HEK293 (cell line): ENCODE measurements at regions of chr7 and their contacts with region 1.

Region 1: GRCh38 chr7:115217373-115217772 is 295.5 kb downstream of the MDFIC start:
- H3K4me3 ChIP-seq: no peak overlapping the region
- H3K27ac ChIP-seq: no peak overlapping the region
- H3K4me1 ChIP-seq: no peaks in the 10 kb centered on the region
- CTCF ChIP-seq: no peak

Region 2: GRCh38 chr7:114865564-114865963 is 351.8 kb before region 1 on chr7:
- CTCF ChIA-PET with region 1: interaction called, 11 read pairs
- POLR2A ChIA-PET with region 1: no interaction called
- H3K4me3 ChIP-seq: no peak overlapping the region
- H3K27ac ChIP-seq: no peak overlapping the region
- H3K4me1 ChIP-seq: no peaks in the 10 kb centered on the region
- CTCF ChIP-seq: peak; percentile 34; the same call in 1 of the 2 replicates

Region 3: GRCh38 chr7:115449689-115450088 is 232.3 kb after region 1 on chr7:
- CTCF ChIA-PET with region 1: no interaction called
- POLR2A ChIA-PET with region 1: no interaction called
- H3K4me3 ChIP-seq: no peak overlapping the region
- H3K27ac ChIP-seq: no peak overlapping the region
- H3K4me1 ChIP-seq: no peaks in the 10 kb centered on the region
- CTCF ChIP-seq: no peak

Region 4: GRCh38 chr7:115475761-115476385 is 258.5 kb after region 1 on chr7:
- CTCF ChIA-PET with region 1: no interaction called
- POLR2A ChIA-PET with region 1: no interaction called
- H3K4me3 ChIP-seq: no peak overlapping the region
- H3K27ac ChIP-seq: no peak overlapping the region
- H3K4me1 ChIP-seq: no peaks in the 10 kb centered on the region; the same call in 1 of the 2 replicates
- CTCF ChIP-seq: no peak